ENCODE measurements at regions of chr6 and their contacts with region 1.

Region 1: GRCh38 chr6:100099189-100100074 is 105.4 kb upstream of the MCHR2 start:
- DNase-seq: peak; percentile 14
- CTCF ChIP-seq: peak; percentile 57

Region 2: GRCh38 chr6:99882128-99882702 is 217.2 kb before region 1 on chr6:
- in situ Hi-C with region 1: loop called (anchors 10 kb)
- DNase-seq: no peak
- CTCF ChIP-seq: no peak

Measured in GM13977 (cell line).